ENCODE measurements at regions of chr9 and their contacts with region 1.

Region 1: GRCh38 chr9:70975821-70976220 is 145.6 kb downstream of the TRPM3 start:
- DNase-seq: no peak
- ATAC-seq: no peak
- H3K4me3 ChIP-seq: no peak overlapping the region
- H3K4me3 Mint-ChIP-seq: no peak overlapping the region
- H3K27ac ChIP-seq: no peak overlapping the region
- H3K27ac Mint-ChIP-seq: no peak overlapping the region
- H3K4me1 ChIP-seq: no peaks in the 10 kb centered on the region
- H3K4me1 Mint-ChIP-seq: no peaks in the 10 kb centered on the region
- H3K27me3 ChIP-seq: no peaks in the 10 kb centered on the region
- H3K27me3 Mint-ChIP-seq: peaks cover 3 to 6% of the 10 kb centered on the region in 2 donors

Region 2: GRCh38 chr9:69949396-69949795 is 1026.4 kb before region 1 on chr9:
- CTCF ChIA-PET with region 1: interaction called in 1 of 2 experiments, 10 read pairs
- POLR2A ChIA-PET with region 1: no interaction called
- DNase-seq: no peak
- ATAC-seq: no peak
- H3K4me3 ChIP-seq: no peak overlapping the region
- H3K4me3 Mint-ChIP-seq: no peak overlapping the region
- H3K27ac ChIP-seq: no peak overlapping the region
- H3K27ac Mint-ChIP-seq: no peak overlapping the region
- H3K4me1 ChIP-seq: no peaks in the 10 kb centered on the region
- H3K4me1 Mint-ChIP-seq: no peaks in the 10 kb centered on the region
- H3K27me3 ChIP-seq: no peaks in the 10 kb centered on the region
- H3K27me3 Mint-ChIP-seq: peaks cover 13 to 22% of the 10 kb centered on the region in 2 donors